ENCODE measurements at regions of chr2 and their contacts with region 1.

Region 1: DNA sequence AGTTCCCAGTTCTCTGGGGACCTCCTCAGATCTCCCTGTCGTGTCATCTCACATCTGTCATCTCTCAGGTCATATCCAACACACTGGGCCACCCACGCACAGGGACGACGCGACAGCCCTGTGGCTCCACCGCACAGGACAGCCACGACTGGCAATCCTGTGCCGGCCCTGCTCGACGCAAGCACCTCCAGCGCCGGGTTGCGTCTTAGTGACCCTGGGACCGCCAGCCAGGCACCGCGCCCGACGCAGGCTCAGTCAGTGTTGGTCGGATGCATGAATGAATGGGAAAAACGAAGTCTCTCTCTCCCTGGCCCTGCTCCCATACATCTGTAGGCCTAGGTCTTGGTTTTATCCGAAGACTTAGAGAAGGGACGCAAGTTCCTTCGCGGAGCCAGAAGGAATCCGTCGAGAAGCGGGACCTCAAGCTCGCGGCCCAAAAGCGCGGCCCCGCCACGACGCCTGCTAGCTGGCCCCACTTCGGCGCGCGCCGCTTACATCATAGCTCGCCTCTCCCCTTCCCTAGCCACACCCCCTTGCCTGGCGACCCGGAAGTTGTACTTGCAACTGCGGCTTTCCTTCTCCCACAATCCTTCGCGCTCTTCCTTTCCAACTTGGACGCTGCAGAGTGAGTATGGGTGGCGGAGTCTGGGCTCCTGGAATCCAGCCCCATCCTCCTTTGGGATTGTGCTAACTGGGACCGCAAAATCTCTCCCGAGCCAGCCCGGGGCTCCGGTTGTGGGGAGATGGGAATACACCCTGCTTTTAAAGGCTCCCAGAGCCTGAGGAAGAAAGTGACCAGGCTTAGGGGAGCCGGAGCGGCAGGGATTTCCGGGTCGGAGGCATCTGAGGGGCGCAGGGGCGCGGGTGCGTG is at the start of gene RPL31:
- DNase-seq: peak; percentile 97

Region 2: DNA sequence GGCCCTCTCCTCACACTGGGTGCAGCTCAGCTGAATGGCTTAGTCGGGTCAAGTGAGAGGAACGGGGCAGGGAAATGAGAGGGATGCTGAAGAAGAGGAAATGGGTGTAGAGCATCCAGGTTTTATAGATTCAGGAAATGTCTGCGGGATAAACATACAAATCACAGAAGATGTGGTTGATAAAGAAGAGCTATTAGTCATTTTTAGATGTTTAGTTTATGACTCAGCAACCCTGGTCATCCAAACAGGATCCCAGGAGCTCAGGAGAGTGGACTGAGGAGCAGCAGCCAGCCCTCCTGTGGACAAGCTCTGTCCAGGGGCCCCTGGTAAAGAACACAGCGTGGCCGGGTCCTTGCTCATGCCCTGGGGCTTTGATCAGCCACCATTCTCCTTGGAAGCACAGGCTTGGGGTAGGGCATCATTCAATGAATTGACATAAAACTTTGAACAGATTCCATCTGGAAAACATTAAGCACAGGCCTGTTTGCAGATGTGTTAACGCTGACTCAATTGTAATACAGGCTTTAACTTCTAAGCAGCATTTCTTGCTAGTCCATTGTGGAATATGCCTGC is 99.0 kb before region 1 on chr2:
- CTCF ChIA-PET with region 1: no interaction called
- POLR2A ChIA-PET with region 1: interaction called, 11 read pairs
- DNase-seq: no peak

Region 3: DNA sequence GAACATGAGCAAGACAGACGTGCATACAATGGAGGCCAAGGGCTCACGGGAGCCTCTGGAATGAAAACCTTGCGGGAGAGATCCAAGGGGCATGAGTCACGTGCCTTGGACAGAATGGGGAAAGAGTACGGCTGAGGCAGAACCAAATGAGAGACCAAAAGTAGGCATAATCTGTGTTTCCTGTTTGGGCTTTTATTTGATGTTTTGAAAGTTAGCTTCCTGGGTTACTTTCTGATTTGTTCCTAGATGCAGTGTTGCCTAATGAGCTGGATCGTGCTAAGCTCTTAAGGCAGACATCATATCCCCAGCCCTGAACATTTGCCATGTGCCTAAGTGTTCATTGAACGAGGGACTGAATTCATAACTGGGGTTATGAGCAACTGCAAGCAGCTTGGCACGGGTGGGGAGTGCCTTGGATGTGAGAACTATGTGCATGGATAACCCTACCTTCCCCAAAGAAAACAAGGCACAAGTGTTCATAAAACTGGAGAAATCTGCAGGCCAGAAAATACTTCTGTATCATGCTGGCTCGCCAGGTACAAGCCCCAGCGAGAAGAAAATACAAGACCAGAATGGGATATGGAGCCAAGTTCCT is 60.2 kb before region 1 on chr2:
- CTCF ChIA-PET with region 1: no interaction called
- POLR2A ChIA-PET with region 1: no interaction called
- DNase-seq: no peak

Region 4: GRCh38 chr2:100964681-100965169 is 37.2 kb before region 1 on chr2:
- CTCF ChIA-PET with region 1: no interaction called
- POLR2A ChIA-PET with region 1: no interaction called
- DNase-seq: no peak

Region 5: DNA sequence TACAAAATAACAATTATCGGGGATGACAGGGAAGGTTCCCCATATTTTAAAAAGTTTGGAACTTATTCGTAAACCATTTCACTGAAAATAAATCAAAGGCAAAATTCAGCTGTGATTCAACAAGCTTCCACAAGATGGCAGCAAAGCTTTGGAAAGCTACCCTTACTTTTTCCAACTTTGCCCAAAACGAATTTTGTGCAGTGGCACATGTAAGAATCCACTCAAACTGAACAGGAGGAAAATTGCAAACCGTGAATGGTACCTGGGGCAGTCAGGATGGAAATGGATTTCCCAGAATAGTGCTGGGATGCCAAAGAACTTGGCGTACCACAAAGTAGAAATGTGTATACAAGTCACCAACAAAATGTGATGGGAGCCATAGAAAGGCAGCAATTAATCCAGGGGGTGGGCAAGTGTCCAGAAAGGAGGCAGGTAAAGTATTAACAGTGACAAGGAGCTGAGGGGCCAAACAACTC is 10.8 kb after region 1 on chr2:
- CTCF ChIA-PET with region 1: no interaction called
- POLR2A ChIA-PET with region 1: interaction called, 14 read pairs
- DNase-seq: peak; percentile 50

Region 6: GRCh38 chr2:101152272-101153076 is 150.5 kb after region 1 on chr2:
- CTCF ChIA-PET with region 1: interaction called, 3 read pairs
- POLR2A ChIA-PET with region 1: interaction called, 21 read pairs
- DNase-seq: no peak

Region 7: DNA sequence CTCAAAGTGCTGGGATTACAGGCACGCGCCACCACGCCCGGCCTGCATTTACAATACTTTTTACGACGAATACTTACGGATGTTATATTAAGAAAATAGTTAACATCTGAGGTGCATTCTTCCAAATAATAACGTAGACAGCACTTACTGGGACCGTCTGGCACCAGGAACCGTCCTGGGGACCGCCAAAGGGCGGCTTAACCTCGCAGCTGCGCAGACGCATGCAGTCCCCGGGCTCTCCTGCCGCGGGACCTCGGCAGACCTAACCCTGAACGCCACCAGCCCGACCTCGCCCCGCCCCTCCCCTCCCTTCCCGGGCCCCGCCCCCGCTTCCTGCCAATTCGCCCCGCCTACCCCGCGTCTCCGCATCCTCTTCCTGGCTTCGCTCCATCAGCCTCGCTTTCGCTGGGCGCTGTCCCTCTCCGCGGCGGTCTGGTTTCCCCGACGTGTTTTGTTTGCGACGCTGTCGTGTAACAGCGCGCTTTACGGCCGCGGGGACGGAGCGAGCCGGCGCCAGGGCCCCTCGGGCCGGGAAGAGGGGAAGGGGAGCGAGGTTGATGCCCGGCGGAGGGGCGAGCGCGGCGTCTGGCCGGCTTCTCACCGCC is 250.6 kb after region 1 on chr2 and contains the start of gene CNOT11:
- CTCF ChIA-PET with region 1: no interaction called
- POLR2A ChIA-PET with region 1: interaction called, 11 read pairs
- DNase-seq: peak; percentile 97

Measured in HEK293T (cell line).